ENCODE measurements at regions of chrX and their contacts with region 1.

Region 1: GRCh38 chrX:48475774-48476577 is at the start of gene FTSJ1:
- DNase-seq: peak; percentile 73
- H3K4me3 Mint-ChIP-seq: peak within 1 kb of the TSS; percentile 70
- H3K27ac Mint-ChIP-seq: peak within 1 kb of the TSS; percentile 21
- H3K4me1 Mint-ChIP-seq: peaks cover 17% of the 10 kb centered on the region
- H3K27me3 Mint-ChIP-seq: no peaks in the 10 kb centered on the region
- CTCF ChIP-seq: no peak
- total RNA-seq, gene FTSJ1: 92.5 and 107 TPM in 2 replicates

Region 2: DNA sequence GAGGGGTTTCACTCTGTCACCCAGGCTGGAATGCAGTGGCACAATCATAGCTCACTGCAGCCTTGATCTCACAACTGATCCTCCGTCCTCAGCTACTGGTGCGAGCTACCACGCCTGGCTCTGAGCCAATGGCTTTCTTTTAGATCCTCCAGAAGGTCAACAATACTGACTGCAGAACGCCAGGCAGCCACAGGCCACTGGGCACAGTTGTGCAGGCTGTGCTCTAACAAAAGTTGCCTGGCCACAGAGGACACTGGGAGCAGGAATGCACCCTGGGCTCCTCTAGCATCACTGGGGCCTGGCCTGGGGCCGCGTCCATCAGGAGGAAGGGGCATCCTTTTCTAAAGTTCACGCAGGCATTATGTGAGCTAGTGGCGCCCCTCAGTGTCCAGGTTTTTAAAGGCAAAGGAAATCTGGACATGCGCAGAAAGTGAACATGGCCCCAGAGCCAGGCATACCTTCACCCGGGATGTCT is 18.0 kb after region 1 on chrX:
- CTCF ChIA-PET with region 1: interaction called, 5 read pairs
- POLR2A ChIA-PET with region 1: interaction called, 22 read pairs
- intact Hi-C with region 1: no loop called
- DNase-seq: peak; percentile 57
- H3K4me3 Mint-ChIP-seq: no peak overlapping the region
- H3K27ac Mint-ChIP-seq: no peak overlapping the region
- H3K4me1 Mint-ChIP-seq: peaks cover 26% of the 10 kb centered on the region
- H3K27me3 Mint-ChIP-seq: no peaks in the 10 kb centered on the region
- CTCF ChIP-seq: peak; percentile 33

Region 3: DNA sequence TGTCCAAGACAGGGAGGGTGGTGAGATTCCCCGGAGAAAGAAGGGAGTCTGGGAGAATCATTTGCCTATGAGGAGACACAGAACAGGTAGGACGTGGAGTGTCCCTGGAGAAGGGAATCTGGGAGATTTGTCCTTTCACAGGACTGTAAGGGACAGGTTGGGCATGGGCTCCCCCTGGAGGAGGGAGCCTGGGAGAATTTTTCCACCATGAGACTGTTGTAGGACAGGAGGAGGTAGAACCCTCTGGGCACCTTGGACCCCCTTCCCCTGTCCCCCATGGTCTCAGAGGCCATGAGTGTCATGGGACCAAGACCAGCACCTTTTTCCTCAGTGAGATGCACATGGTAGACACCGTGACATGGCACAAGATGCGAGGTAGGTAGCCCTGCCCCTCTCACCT is 35.6 kb after region 1 on chrX:
- CTCF ChIA-PET with region 1: interaction called, 5 read pairs
- POLR2A ChIA-PET with region 1: interaction called, 5 read pairs
- intact Hi-C with region 1: loop called (anchors 1 kb)
- DNase-seq: no peak
- H3K4me3 Mint-ChIP-seq: no peak overlapping the region
- H3K27ac Mint-ChIP-seq: no peak overlapping the region
- H3K4me1 Mint-ChIP-seq: peaks cover 5% of the 10 kb centered on the region
- H3K27me3 Mint-ChIP-seq: no peaks in the 10 kb centered on the region
- CTCF ChIP-seq: no peak

Region 4: GRCh38 chrX:48539345-48540027 is 63.5 kb after region 1 on chrX and contains the start of gene TBC1D25:
- CTCF ChIA-PET with region 1: interaction called, 3 read pairs
- POLR2A ChIA-PET with region 1: interaction called, 10 read pairs
- intact Hi-C with region 1: no loop called
- DNase-seq: peak; percentile 96
- H3K4me3 Mint-ChIP-seq: peak within 1 kb of the TSS; percentile 83
- H3K27ac Mint-ChIP-seq: peak within 1 kb of the TSS; percentile 87
- H3K4me1 Mint-ChIP-seq: peaks cover 11% of the 10 kb centered on the region
- H3K27me3 Mint-ChIP-seq: no peaks in the 10 kb centered on the region
- CTCF ChIP-seq: peak; percentile 42
- total RNA-seq, gene TBC1D25: 14.4 and 18.2 TPM in 2 replicates

Region 5: GRCh38 chrX:48589482-48590162 is 113.6 kb after region 1 on chrX:
- CTCF ChIA-PET with region 1: interaction called, 6 read pairs
- POLR2A ChIA-PET with region 1: no interaction called
- intact Hi-C with region 1: loop called (anchors 5 kb)
- DNase-seq: peak; percentile 81
- H3K4me3 Mint-ChIP-seq: peak overlapping the region; percentile 70
- H3K27ac Mint-ChIP-seq: peak overlapping the region; percentile 90
- H3K4me1 Mint-ChIP-seq: peaks cover 7% of the 10 kb centered on the region
- H3K27me3 Mint-ChIP-seq: no peaks in the 10 kb centered on the region
- CTCF ChIP-seq: no peak

Region 6: DNA sequence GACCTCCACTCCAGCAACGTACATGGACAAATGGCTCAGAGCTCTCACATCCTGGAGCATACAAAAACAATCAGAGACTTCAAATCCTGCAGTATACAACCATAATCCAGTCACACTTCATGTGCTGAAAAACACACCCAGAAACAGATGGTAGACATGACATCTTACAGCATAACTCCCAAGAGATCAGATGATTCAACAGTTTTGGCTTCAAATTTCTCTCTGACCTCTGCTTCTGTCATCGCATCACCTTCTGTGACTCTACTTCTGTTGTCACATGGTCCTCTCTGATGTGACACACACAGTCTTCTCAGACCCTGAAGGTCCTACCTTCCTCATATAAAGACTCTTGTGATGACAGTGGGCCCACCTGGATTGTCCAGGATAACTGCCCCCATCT is 239.1 kb after region 1 on chrX:
- CTCF ChIA-PET with region 1: no interaction called
- POLR2A ChIA-PET with region 1: no interaction called
- intact Hi-C with region 1: no loop called
- DNase-seq: peak; percentile 3
- H3K4me3 Mint-ChIP-seq: no peak overlapping the region
- H3K27ac Mint-ChIP-seq: no peak overlapping the region
- H3K4me1 Mint-ChIP-seq: peaks cover 18% of the 10 kb centered on the region
- H3K27me3 Mint-ChIP-seq: no peaks in the 10 kb centered on the region
- CTCF ChIP-seq: no peak

Measured in MCF 10A (cell line).